Endothelial cell of umbilical vein (primary cell): ENCODE measurements at regions of chr2 and their contacts with region 1.

Region 1: DNA sequence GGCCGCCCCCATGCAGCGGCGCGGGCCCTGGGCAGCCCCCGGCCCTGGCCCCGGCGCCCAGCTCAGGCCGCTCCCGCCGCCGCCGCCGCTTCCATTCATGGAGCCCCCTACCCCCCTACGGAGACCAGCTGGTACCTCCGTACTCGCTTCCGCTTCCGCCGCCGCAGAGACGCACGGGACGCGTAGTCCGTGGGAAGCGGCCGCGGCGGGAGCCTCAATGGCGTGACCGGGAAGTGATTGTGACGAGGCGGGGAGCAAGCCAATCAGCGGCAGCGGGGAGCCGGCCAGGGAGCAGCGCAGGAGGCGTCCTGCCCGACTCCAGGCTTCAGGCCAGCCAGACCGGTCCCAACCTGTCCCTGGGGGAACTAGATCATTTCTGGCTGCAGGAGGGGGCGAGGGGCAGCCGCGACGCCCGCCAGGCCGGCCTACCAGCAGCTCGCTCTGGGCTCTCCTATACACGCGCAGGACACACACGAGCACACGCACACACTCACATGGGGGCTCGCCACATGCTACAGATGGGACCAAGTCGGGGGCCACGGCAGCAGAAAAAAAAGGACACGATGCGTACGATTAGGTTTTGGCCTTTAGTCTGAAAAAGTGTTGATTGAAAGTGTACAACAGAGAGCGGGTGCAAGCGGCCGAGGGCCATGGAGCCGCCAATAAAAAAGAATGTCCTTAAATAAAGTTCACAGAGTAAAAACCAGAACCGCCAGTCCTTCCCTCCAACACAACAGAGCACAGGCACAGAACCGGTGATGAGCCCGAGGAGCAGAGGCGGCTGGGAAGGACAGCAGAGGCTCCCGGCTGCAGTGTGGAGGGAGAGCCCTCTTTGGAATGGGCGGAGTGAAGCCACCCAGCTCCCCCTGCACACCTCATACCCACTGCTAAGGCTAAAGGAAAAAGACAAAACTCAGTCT is at the start of gene ZNF513:
- DNase-seq: peak; percentile 95
- H3K4me3 ChIP-seq: peak within 1 kb of the TSS; percentile 75 to 85 (median 77)
- H3K27ac ChIP-seq: peak within 1 kb of the TSS; percentile 97
- H3K4me1 ChIP-seq: peaks cover 17% of the 10 kb centered on the region
- H3K27me3 ChIP-seq: no peaks in the 10 kb centered on the region
- CTCF ChIP-seq: no peak
- POLR2A ChIP-seq: no peak
- total RNA-seq, gene ZNF513: 19.0 and 20.7 TPM in 2 replicates

Region 2: DNA sequence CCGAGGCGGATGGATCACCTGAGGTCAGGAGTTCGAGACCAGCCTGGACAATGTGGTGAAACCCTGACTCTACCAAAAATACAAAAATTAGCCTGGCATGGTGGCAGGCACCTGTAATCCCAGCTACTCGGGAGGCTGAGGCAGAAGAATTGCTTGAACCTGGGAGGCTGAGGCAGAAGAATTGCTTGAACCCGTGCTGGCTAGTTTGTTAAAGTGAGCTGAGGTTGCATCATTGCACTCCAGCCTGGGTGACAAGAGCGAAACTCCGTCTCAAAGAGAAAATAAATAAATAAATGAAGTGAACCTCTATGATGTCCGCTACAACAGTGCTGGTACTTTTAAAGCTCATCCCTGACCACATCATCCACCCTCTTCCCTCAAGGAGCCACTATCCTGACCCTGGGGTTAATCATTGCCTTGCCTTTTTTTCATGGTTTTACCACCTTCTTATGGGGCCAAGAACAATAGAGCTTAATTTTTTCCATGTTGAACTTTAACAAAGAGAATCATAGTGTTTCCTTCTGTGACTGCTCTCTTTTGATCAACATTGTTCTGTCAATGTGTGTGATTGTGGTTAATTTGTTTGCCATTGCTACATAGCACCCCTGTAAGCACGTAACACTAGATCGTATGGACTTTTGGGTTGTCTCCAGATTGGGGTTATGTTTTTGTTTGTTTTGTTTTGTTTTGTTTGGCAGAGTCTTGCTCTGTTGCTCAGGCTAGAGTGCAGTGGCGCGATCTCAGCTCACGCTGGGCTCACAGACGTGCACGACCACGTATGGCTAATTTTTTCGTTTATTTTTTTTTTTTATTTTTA is 186.1 kb before region 1 on chr2:
- CTCF ChIA-PET with region 1: no interaction called
- POLR2A ChIA-PET with region 1: no interaction called
- dilution Hi-C with region 1: no loop called
- intact Hi-C with region 1: no loop called
- DNase-seq: no peak
- H3K4me3 ChIP-seq: no peak overlapping the region
- H3K27ac ChIP-seq: no peak overlapping the region
- H3K4me1 ChIP-seq: no peaks in the 10 kb centered on the region
- H3K27me3 ChIP-seq: no peaks in the 10 kb centered on the region
- CTCF ChIP-seq: no peak
- POLR2A ChIP-seq: no peak

Region 3: GRCh38 chr2:27823569-27823968 is 442.7 kb after region 1 on chr2:
- CTCF ChIA-PET with region 1: no interaction called
- POLR2A ChIA-PET with region 1: interaction called, 10 read pairs
- dilution Hi-C with region 1: no loop called
- intact Hi-C with region 1: no loop called
- DNase-seq: no peak
- H3K4me3 ChIP-seq: no peak overlapping the region
- H3K27ac ChIP-seq: no peak overlapping the region
- H3K4me1 ChIP-seq: no peaks in the 10 kb centered on the region
- H3K27me3 ChIP-seq: no peaks in the 10 kb centered on the region
- CTCF ChIP-seq: no peak
- POLR2A ChIP-seq: no peak